A673 (cell line): ENCODE measurements at regions of chr6 and their contacts with region 1.

Region 1: GRCh38 chr6:154675602-154676088 is 57.6 kb upstream of the SCAF8 start:
- DNase-seq: peak; percentile 96
- H3K4me3 ChIP-seq: no peak overlapping the region
- H3K27ac ChIP-seq: no peak overlapping the region
- H3K4me1 ChIP-seq: no peaks in the 10 kb centered on the region
- H3K27me3 ChIP-seq: no peaks in the 10 kb centered on the region
- CTCF ChIP-seq: peak; percentile 100

Region 2: DNA sequence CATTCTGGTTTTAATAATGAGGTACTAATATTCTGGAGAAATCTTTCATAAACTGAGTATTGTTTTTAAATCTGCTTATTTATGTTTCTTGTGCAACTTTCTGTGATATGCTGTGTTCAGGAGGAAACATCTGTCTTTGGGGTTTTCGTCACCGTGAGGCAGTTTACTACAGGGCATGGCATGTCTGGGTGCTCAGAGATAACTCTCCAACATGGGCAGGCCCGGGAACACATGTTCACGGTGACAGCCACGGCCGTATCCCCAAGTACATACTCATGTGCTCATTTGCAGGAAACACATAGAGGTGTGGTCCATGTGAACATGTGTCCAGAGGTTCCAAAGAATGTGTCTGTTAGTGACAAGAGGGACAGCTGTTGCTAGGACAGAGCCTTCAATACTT is 103.1 kb before region 1 on chr6:
- CTCF ChIA-PET with region 1: interaction called, 13 read pairs
- POLR2A ChIA-PET with region 1: no interaction called
- intact Hi-C with region 1: no loop called
- DNase-seq: no peak
- H3K4me3 ChIP-seq: no peak overlapping the region
- H3K27ac ChIP-seq: no peak overlapping the region
- H3K4me1 ChIP-seq: no peaks in the 10 kb centered on the region
- H3K27me3 ChIP-seq: no peaks in the 10 kb centered on the region
- CTCF ChIP-seq: no peak

Region 3: GRCh38 chr6:154805288-154805911 is 129.8 kb after region 1 on chr6:
- CTCF ChIA-PET with region 1: interaction called, 24 read pairs
- POLR2A ChIA-PET with region 1: interaction called, 7 read pairs
- intact Hi-C with region 1: loop called (anchors 1 kb)
- DNase-seq: peak; percentile 61
- H3K4me3 ChIP-seq: no peak overlapping the region
- H3K27ac ChIP-seq: no peak overlapping the region
- H3K4me1 ChIP-seq: no peaks in the 10 kb centered on the region
- H3K27me3 ChIP-seq: no peaks in the 10 kb centered on the region
- CTCF ChIP-seq: peak; percentile 55

Region 4: DNA sequence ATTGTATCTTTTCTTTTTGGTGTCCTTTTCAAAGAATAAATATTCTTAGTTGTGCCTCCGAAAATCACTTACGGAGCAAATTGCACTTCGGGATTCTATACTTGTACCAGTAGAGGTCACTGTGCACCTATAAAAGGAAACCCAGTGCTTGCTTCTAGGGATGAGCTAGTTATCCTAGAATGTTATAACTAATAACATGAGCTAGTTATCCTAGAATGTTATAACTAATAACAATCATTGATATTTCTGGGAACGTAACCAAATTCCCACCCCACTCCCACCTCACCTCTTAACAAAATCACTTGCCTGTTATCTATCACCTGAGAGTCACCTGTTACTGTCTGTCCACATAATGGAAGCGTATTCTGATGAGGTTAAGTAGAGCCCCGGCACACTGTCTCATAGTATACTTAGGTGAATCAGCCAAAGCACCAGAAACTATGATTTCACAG is 192.5 kb after region 1 on chr6:
- CTCF ChIA-PET with region 1: interaction called, 8 read pairs
- POLR2A ChIA-PET with region 1: no interaction called
- intact Hi-C with region 1: loop called (anchors 5 kb)
- DNase-seq: peak; percentile 77
- H3K4me3 ChIP-seq: no peak overlapping the region
- H3K27ac ChIP-seq: no peak overlapping the region
- H3K4me1 ChIP-seq: no peaks in the 10 kb centered on the region
- H3K27me3 ChIP-seq: no peaks in the 10 kb centered on the region
- CTCF ChIP-seq: peak; percentile 81

Region 5: DNA sequence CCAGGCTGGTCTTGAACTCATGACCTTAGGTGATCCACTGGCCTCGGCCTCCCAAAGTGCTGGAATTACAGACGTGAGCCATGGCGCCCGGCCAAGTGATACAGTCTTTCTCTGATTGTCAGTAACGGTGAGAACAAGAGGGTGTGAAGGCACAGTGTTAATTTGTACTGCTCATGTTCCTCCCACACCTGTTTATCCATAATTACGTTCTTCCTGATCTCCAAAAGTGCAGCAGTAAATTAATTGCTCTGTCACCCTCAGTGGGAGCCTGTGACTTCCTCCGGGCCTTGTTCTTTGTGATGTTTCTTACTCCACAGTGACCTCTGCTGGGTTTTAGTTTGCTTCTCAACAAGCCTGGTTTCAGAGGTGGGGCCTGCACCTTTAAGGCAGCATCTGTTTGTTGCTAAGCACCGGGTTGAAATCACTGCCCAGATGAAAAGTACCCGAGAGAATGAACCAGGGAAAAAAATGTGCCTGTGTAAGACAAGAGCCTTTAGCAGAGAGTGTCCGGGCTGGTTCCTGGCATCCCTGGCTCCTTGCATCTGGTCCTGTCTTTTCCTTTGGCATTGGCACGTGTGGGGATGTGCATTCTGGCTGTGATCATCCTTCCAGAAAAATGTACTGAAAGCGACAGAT is 499.0 kb after region 1 on chr6:
- CTCF ChIA-PET with region 1: interaction called, 5 read pairs
- POLR2A ChIA-PET with region 1: no interaction called
- intact Hi-C with region 1: loop called (anchors 2 kb)
- DNase-seq: peak; percentile 90
- H3K4me3 ChIP-seq: no peak overlapping the region
- H3K27ac ChIP-seq: no peak overlapping the region
- H3K4me1 ChIP-seq: peaks cover 25% of the 10 kb centered on the region
- H3K27me3 ChIP-seq: no peaks in the 10 kb centered on the region
- CTCF ChIP-seq: peak; percentile 72

Region 6: DNA sequence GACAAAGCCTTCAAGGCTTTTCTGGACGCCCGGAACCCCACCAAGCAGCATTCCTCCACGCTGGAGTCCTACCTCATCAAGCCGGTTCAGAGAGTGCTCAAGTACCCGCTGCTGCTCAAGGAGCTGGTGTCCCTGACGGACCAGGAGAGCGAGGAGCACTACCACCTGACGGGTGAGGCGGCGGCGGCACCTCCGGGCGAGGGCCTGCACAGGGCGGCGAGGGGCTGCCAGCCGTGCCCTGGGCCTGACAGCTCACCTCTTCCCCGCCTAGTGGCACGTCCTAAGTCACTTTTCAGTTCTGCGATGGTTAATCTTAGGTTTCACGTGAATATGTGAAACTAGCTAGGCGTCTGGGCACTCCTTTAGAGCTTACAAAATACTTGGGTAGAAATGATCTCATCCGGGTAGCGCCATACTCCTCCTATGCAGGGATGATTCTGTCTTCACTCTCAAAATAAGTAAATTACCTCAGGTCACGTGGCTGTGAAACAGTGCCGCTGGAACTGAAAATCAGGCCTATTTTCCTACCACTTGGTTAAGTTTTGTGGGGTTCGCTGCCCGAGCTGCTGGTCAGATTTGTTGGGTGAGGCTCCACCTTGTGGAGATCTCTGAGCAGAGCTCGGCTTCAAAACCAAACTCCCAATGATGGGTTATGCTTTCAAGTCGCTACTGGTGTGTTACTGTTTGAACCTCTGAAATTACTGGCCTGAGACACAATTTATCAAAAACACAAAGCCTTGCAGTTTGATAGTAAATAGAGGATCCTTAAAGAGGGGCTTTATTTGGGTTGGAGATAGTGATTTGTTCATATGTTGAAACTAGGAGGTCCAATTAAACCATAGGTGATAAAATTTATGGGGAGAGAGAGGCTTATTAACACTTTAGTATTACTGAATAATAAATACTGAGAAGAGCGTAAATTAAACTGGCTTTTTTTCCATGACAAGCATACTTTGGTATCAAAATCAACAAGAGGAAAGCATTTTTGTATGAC is 572.7 kb after region 1 on chr6:
- CTCF ChIA-PET with region 1: interaction called, 9 read pairs
- POLR2A ChIA-PET with region 1: no interaction called
- intact Hi-C with region 1: loop called (anchors 10 kb)
- DNase-seq: peak; percentile 61
- H3K4me3 ChIP-seq: no peak overlapping the region
- H3K27ac ChIP-seq: no peak overlapping the region
- H3K4me1 ChIP-seq: no peaks in the 10 kb centered on the region
- H3K27me3 ChIP-seq: no peaks in the 10 kb centered on the region
- CTCF ChIP-seq: peak; percentile 74

Region 7: DNA sequence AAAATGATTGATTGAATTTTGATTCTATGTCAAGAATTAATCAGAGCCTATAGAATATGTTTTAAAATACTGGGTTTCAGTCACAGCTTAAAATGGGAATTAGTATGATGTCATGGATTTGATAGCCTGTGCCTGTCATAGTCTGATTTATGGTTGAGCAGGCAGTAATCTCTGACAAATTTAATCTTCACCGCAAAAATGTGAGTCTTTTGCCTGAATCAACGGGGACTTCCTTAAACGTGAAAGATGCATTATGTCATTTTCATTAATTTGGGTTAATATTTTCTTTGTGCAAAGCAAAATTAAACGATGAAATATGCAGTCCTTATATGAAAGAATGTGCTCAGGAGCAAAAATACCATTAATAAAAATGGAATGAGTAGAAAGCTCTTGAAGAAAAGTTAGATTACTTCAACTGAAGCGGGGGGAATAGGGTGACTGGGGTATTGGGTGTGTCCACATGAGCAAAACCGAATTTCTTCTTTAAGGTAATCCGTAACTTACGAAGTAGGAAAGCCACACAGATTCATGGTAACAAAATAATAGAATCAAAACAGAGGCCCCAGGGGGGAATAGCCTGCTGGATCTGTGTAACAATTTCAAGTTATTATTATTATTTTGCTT is 1119.6 kb after region 1 on chr6:
- CTCF ChIA-PET with region 1: no interaction called
- POLR2A ChIA-PET with region 1: no interaction called
- intact Hi-C with region 1: no loop called
- DNase-seq: peak; percentile 69
- H3K4me3 ChIP-seq: no peak overlapping the region
- H3K27ac ChIP-seq: no peak overlapping the region
- H3K4me1 ChIP-seq: peaks cover 10% of the 10 kb centered on the region
- H3K27me3 ChIP-seq: no peaks in the 10 kb centered on the region
- CTCF ChIP-seq: no peak